Aorta (tissue), 5 donors: ENCODE measurements at regions of chr1 and their contacts with region 1.

Region 1: DNA sequence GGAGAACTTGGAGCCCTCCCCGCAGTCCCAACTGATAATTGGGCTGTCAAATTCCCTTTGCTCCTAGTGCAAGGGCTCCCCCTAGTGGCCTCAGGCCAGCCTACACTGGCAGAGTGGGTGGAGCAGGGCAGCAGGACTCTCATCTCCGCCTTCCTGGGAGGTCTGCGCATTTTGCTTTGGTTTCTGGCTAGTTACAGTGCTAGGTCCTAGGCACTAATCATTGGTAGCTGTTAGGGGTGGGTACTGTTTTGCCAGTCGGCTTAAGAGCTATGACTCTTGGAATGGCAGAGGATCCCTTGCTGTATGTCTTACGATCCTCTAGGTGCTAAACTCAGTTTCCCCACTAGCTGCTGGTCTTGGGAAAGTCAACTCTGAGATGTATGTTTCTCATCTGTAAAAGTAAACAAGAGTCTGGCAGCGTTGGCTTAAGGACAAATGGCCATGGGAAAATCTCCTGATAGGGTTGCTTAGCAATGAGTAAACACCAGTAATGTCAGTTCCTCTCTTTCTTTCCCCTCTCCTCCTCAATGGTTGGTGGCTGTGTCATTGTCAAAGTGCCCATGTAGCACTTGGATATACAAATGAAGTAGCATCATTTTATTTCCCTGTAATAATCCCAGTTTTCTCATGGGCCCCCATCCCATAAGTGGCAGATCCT is 2.1 kb upstream of the FYB2 start:
- DNase-seq: peak; percentile 77 to 91
- ATAC-seq: peak; percentile 65
- H3K4me3 ChIP-seq: no peak overlapping the region
- H3K27ac ChIP-seq: no peak overlapping the region
- H3K4me1 ChIP-seq: no peaks in the 10 kb centered on the region
- H3K27me3 ChIP-seq: peaks cover 0 to 3% of the 10 kb centered on the region in 2 donors

Region 2: DNA sequence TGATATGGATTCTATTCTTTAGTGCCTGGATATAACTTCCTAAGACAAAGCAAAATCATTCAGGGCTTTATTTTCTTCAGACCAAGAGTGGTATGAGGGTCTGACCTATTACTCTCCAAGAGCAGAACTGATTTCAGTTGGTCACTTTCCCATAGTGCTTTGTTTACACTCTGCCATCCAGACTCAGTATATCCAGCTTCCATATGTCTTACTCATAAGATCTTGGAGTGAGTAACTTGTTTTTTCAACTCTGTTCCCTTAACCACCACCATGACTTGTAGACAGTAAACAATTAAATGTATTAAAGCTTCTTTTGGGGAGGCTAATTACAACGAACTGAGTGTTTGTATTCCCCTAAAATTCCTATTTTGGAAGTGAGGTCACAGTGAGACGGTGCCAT is 1689.5 kb before region 1 on chr1:
- intact Hi-C with region 1: loop called in 1 of 2 experiments (anchors 10 kb)
- DNase-seq: no peak
- ATAC-seq: no peak
- H3K4me3 ChIP-seq: no peak overlapping the region
- H3K27ac ChIP-seq: no peak overlapping the region
- H3K4me1 ChIP-seq: no peaks in the 10 kb centered on the region
- H3K27me3 ChIP-seq: no peaks in the 10 kb centered on the region

Region 3: DNA sequence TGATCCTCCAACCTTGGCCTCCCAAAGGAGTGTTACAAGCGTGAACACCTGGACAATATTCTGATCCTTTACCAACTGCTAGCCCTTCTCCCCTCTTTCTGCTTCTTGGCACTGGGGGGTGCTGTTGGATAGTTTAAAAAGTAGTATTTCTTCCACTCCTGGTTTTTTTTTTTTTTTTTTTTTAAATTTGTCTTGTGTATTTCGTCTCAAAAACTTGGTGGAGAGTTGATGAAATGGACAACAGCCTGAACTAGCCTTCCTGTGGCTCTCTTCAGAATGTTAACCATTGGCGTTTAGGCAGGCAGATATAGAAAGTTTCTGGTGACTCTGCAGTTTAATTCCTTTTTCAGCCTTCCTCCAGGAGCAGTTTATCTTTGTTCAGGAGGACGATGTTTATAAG is 1536.4 kb before region 1 on chr1:
- intact Hi-C with region 1: loop called in 1 of 2 experiments (anchors 10 kb)
- DNase-seq: no peak
- ATAC-seq: peak; percentile 49
- H3K4me3 ChIP-seq: no peak overlapping the region
- H3K27ac ChIP-seq: no peak overlapping the region
- H3K4me1 ChIP-seq: no peaks in the 10 kb centered on the region
- H3K27me3 ChIP-seq: no peaks in the 10 kb centered on the region

Region 4: DNA sequence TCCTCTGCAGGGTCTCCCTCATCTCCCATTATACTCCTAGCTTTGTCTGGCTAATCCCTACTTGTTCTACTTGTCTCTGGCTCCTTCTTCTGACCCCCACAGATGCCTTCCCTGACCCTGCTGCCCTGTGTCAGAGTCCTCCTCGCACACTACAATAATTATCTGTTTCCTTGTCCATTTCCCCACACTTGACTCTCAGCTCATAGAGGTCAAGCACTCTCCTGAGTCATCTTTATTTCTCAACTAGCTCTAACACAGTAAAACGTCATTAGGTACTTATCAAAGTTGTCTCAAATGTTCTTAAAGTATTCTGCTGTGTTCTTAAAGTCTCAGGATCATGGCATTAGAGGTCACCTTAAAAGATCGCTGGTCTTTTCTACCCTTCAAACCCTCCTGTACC is 80.4 kb after region 1 on chr1:
- intact Hi-C with region 1: no loop called
- DNase-seq: no peak
- ATAC-seq: no peak
- H3K4me3 ChIP-seq: no peak overlapping the region
- H3K27ac ChIP-seq: no peak overlapping the region
- H3K4me1 ChIP-seq: no peaks in the 10 kb centered on the region
- H3K27me3 ChIP-seq: no peaks in the 10 kb centered on the region